Vagina (tissue), 2 donors: ENCODE measurements at regions of chr11 and their contacts with region 1.

Region 1: GRCh38 chr11:62905927-62906531 is 15.1 kb downstream of the CHRM1 start:
- DNase-seq: peak in 1 of 2 donors; percentile 90
- H3K4me3 ChIP-seq: no peak overlapping the region
- H3K27ac ChIP-seq: no peak overlapping the region
- H3K4me1 ChIP-seq: peaks cover 18% of the 10 kb centered on the region
- H3K27me3 ChIP-seq: no peaks in the 10 kb centered on the region
- CTCF ChIP-seq: peak; percentile 92 to 96 (median 94)
- POLR2A ChIP-seq: no peak

Region 2: DNA sequence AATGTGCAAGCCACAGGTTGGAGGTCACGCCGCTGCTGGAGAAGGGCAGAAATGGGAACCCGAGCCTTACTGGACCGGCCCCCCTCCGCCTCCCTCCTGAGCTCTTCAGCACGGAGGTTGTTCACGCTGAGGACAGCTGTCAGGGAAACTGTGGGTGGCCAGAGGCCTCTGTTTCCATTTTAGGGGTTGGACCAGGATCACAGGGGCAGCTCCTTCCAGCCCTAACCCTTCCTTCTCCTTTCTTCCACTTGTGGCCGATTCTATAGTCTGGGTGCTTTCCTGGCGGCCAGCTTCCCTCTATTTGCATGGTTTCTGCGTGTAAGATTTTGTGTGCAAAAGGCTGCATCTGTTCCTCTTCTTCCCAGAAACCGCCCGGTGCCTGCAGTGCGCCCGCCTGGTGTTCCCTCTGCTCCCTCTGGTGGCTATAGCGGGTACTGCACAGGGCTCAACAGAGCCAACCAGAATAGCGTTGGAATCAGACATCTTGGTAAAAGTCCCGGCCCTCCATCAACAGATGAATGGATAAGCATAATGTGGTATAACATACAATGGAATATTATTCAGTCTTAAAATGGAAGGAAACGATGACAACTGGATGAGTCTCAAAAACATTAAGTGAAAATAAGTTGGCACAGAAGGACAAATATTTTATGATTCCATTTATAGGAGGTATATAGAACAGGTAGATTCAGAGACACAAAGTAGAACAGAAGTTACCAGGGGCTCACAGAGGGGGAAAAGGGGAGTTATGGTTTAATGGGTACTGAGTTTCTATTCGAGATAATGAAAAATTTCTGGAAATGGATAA is 118.0 kb after region 1 on chr11:
- intact Hi-C with region 1: loop called (anchors 2 kb)
- DNase-seq: peak in 1 of 2 donors; percentile 93
- H3K4me3 ChIP-seq: no peak overlapping the region
- H3K27ac ChIP-seq: no peak overlapping the region
- H3K4me1 ChIP-seq: peaks cover 7% of the 10 kb centered on the region
- H3K27me3 ChIP-seq: no peaks in the 10 kb centered on the region
- CTCF ChIP-seq: peak; percentile 98 to 99 (median 99)
- POLR2A ChIP-seq: no peak